A673 (cell line): ENCODE measurements at regions of chr13 and their contacts with region 1.

Region 1: GRCh38 chr13:92187378-92187989 is 789.1 kb downstream of the GPC5 start:
- DNase-seq: peak; percentile 64
- H3K4me3 ChIP-seq: no peak overlapping the region
- H3K27ac ChIP-seq: no peak overlapping the region
- H3K4me1 ChIP-seq: no peaks in the 10 kb centered on the region
- H3K27me3 ChIP-seq: no peaks in the 10 kb centered on the region
- CTCF ChIP-seq: peak; percentile 88

Region 2: GRCh38 chr13:90420683-90421082 is 1766.8 kb before region 1 on chr13:
- CTCF ChIA-PET with region 1: no interaction called
- POLR2A ChIA-PET with region 1: no interaction called
- intact Hi-C with region 1: no loop called
- DNase-seq: no peak
- H3K4me3 ChIP-seq: no peak overlapping the region
- H3K27ac ChIP-seq: no peak overlapping the region
- H3K4me1 ChIP-seq: peaks cover 19% of the 10 kb centered on the region
- H3K27me3 ChIP-seq: no peaks in the 10 kb centered on the region
- CTCF ChIP-seq: peak; percentile 33; the same call in 1 of the 2 replicates

Region 3: DNA sequence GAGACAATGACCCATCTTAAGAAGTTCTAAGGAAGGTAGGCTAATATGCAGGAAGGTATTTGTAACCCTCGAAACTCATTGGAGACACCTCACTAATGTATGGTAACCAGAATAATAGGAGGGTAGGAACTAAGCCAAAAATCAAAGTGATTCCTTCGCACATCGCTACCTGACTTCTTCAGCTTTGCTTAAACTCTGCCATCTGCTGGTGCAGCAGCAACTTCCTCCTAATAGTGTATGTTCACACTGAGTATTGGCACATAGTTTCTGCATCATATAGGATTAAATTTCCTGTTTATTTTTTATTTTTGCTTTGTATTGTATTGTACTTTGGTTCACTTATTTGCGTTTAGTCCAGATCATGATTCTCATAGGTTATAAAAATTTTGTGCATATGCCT is 112.8 kb before region 1 on chr13:
- CTCF ChIA-PET with region 1: no interaction called
- POLR2A ChIA-PET with region 1: no interaction called
- intact Hi-C with region 1: no loop called
- DNase-seq: peak; percentile 48
- H3K4me3 ChIP-seq: no peak overlapping the region
- H3K27ac ChIP-seq: no peak overlapping the region
- H3K4me1 ChIP-seq: no peaks in the 10 kb centered on the region
- H3K27me3 ChIP-seq: no peaks in the 10 kb centered on the region
- CTCF ChIP-seq: peak; percentile 64

Region 4: DNA sequence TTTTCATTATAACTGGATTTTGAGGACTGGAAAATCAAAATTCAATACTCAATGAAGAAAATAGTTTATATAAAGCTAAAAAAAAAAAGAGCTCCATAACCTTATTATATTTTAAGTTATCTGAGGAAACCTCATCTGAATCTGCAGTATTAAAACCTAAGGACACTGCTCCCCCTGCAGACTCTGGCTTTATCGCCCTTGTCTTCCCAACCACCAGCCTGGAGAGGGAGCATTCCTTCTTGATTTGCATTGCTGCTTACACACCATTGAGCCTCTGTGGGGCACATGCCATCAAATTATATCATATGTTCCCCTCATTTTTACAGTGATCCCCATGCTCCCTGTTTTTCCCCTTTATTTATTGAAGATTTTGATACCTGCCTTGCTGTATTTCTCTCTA is 167.7 kb after region 1 on chr13:
- CTCF ChIA-PET with region 1: no interaction called
- POLR2A ChIA-PET with region 1: no interaction called
- intact Hi-C with region 1: loop called (anchors 10 kb)
- DNase-seq: peak; percentile 40
- H3K4me3 ChIP-seq: no peak overlapping the region
- H3K27ac ChIP-seq: no peak overlapping the region
- H3K4me1 ChIP-seq: no peaks in the 10 kb centered on the region
- H3K27me3 ChIP-seq: no peaks in the 10 kb centered on the region
- CTCF ChIP-seq: peak; percentile 47